Endothelial cell of umbilical vein (primary cell): ENCODE measurements at regions of chr1 and their contacts with region 1.

Region 1: DNA sequence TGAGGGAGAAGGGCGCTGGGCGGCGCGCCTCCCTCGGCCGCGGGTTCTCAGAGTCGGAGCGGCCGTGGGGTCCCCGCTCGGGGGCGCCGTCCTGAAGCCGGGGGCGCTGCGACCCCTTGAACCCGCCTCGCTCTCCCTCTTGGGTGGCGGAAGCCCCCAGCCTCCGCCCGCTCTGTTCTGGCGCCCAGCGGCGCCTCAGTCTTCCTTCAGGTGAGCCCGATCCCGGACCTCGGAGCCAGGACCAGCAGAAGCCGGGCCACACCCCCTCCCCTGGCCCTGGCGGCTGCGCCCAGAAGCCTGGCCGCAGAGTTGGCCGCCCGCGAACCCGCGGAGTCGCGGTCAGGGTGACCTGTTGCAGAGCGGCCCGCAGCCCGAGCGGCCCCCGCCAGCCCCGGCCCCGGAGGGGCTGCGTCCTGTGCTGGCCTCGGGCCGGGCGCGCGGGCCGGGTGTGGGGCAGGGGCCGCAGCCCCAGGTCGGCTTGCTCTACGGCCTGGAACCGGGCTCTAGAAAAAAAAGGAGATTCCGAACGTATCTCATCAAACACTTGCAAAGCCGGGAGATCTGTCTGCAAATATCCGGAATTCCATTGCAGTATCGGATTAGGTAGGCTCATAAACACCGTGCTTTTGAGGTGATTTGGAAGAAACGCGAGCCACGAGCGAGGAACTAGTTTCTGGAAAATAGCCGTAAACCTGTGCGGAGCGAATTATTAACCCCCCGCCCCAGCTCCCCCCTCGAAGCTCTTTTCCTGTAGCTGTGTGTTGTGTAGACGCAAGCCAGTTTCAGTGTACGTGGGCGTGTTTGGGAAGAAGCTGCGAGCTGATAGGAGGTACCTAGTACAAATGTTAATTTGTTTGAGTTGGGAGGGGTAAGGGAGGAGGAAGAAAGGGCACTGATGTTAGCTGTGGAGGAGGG is 816 bp downstream of the RALGPS2 start:
- DNase-seq: peak; percentile 86
- H3K4me3 ChIP-seq: peak overlapping the region; percentile 68 to 94 (median 92)
- H3K27ac ChIP-seq: peak overlapping the region; percentile 68
- H3K4me1 ChIP-seq: peaks cover 28% of the 10 kb centered on the region
- H3K27me3 ChIP-seq: no peaks in the 10 kb centered on the region
- CTCF ChIP-seq: peak in 1 of 2 donors; percentile 25
- POLR2A ChIP-seq: peak; percentile 49

Region 2: GRCh38 chr1:178768423-178768822 is 42.6 kb after region 1 on chr1:
- CTCF ChIA-PET with region 1: interaction called, 5 read pairs
- POLR2A ChIA-PET with region 1: no interaction called
- dilution Hi-C with region 1: no loop called
- intact Hi-C with region 1: loop called (anchors 1 kb)
- DNase-seq: no peak
- H3K4me3 ChIP-seq: no peak overlapping the region
- H3K27ac ChIP-seq: no peak overlapping the region
- H3K4me1 ChIP-seq: no peaks in the 10 kb centered on the region
- H3K27me3 ChIP-seq: no peaks in the 10 kb centered on the region
- CTCF ChIP-seq: peak; percentile 73 to 78
- POLR2A ChIP-seq: no peak

Region 3: DNA sequence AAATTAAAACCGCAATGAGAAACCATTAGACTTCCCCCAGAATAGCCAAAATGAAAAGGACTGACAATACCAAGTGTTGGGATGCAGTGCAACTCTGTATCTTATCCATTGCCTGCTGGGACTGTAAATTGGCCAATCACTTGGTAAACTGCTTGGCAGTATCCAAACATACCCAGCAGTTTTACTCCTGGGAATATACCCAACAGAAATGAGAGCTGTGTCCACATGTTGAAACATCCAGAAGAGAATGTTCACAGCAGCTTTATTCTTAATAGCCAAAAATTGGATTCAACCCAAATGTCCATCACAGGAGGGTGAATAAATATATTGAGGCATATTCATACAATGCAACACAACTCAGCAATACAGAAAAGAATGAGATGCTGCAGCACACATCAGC is 286.2 kb after region 1 on chr1:
- CTCF ChIA-PET with region 1: no interaction called
- POLR2A ChIA-PET with region 1: no interaction called
- dilution Hi-C with region 1: no loop called
- intact Hi-C with region 1: no loop called
- DNase-seq: no peak
- H3K4me3 ChIP-seq: no peak overlapping the region
- H3K27ac ChIP-seq: no peak overlapping the region
- H3K4me1 ChIP-seq: no peaks in the 10 kb centered on the region
- H3K27me3 ChIP-seq: peaks cover 0 to 2% of the 10 kb centered on the region in 2 experiments
- CTCF ChIP-seq: no peak
- POLR2A ChIP-seq: no peak